PC-3 (cell line): ENCODE measurements at regions of chr20 and their contacts with region 1.

Region 1: GRCh38 chr20:33046412-33046811 is 7.3 kb upstream of the BPIFB3 start:
- DNase-seq: no peak
- ATAC-seq: no peak
- H3K4me3 ChIP-seq: no peak overlapping the region
- H3K27ac ChIP-seq: no peak overlapping the region
- H3K4me1 ChIP-seq: no peaks in the 10 kb centered on the region
- H3K27me3 ChIP-seq: peaks cover 15% of the 10 kb centered on the region; the same call in 1 of the 2 replicates
- CTCF ChIP-seq: no peak

Region 2: DNA sequence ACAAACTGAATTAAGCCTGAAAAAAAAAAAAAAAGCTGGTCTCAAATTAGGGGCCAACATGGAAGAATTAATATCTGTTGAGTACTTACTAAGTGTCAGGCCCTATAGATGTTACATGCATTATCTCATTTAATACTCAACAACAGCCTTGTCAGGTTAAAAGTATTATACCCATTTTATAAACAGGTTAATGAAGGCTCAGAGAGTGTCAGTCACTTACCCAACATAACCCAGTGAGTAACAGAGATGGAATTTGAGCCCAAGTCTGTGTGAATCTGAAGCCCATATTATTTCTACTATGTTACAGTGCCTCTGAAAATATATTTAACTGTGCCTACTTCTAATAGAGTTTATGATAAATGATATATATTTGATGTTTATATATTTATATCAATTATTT is 1076.9 kb after region 1 on chr20:
- CTCF ChIA-PET with region 1: interaction called, 13 read pairs
- POLR2A ChIA-PET with region 1: no interaction called
- intact Hi-C with region 1: no loop called
- DNase-seq: no peak
- ATAC-seq: no peak
- H3K4me3 ChIP-seq: no peak overlapping the region
- H3K27ac ChIP-seq: no peak overlapping the region
- H3K4me1 ChIP-seq: no peaks in the 10 kb centered on the region
- H3K27me3 ChIP-seq: no peaks in the 10 kb centered on the region
- CTCF ChIP-seq: no peak